IMR-90 (cell line): ENCODE measurements at regions of chr5 and their contacts with region 1.

Region 1: DNA sequence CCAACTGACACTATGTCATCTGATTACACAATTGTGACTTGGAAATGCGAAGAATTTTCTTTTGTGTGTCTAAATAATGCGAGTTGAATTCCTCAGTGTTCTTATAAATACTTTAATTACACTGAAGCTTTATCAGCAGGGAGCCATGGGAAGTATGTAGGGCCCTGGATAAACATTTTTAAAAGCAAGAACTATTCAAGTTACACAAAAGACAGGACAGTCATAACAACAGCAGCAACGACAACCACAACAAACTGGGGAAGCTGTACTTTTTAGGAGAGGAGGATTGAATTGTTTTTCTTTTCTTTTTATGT is 250.3 kb upstream of the ZNF608 start:
- DNase-seq: peak; percentile 56
- ATAC-seq: peak; percentile 68
- H3K4me3 ChIP-seq: no peak overlapping the region
- H3K27ac ChIP-seq: no peak overlapping the region; the same call in 1 of the 2 replicates
- H3K4me1 ChIP-seq: peaks cover 13% of the 10 kb centered on the region
- H3K27me3 ChIP-seq: no peaks in the 10 kb centered on the region
- CTCF ChIP-seq: no peak
- POLR2A ChIP-seq: no peak
- RAD21 ChIP-seq: no peak

Region 2: DNA sequence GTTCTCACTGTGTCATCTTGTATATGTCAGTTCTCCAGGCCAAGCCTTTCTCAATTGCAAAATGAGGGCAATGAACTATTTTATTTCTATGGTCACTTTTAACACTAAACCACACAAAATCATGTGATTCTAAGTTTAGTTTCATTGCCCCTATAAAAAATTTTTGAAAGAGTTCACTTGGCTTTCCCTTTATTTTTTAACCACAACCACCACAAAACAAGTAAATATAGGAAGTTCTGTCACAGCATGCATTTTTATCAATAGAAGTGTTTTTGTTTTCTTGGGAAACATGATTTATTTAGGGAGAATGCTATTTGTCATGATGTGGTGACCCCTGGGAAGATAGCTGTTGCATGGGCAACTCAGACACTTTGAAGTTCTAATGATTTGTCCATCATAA is 1315.7 kb before region 1 on chr5:
- CTCF ChIA-PET with region 1: no interaction called
- POLR2A ChIA-PET with region 1: interaction called, 11 read pairs
- dilution Hi-C with region 1: no loop called
- in situ Hi-C with region 1: no loop called
- intact Hi-C with region 1: no loop called
- DNase-seq: no peak
- ATAC-seq: no peak
- H3K4me3 ChIP-seq: no peak overlapping the region
- H3K27ac ChIP-seq: no peak overlapping the region
- H3K4me1 ChIP-seq: no peaks in the 10 kb centered on the region
- H3K27me3 ChIP-seq: no peaks in the 10 kb centered on the region
- CTCF ChIP-seq: no peak
- POLR2A ChIP-seq: no peak
- RAD21 ChIP-seq: no peak

Region 3: GRCh38 chr5:125311743-125312142 is 315.0 kb after region 1 on chr5:
- CTCF ChIA-PET with region 1: no interaction called
- POLR2A ChIA-PET with region 1: no interaction called
- dilution Hi-C with region 1: no loop called
- in situ Hi-C with region 1: no loop called
- intact Hi-C with region 1: loop called (anchors 2 kb)
- DNase-seq: peak; percentile 94
- ATAC-seq: peak; percentile 94
- H3K4me3 ChIP-seq: no peak overlapping the region
- H3K27ac ChIP-seq: peak overlapping the region; percentile 70
- H3K4me1 ChIP-seq: peaks cover 5% of the 10 kb centered on the region
- H3K27me3 ChIP-seq: no peaks in the 10 kb centered on the region
- CTCF ChIP-seq: no peak
- POLR2A ChIP-seq: no peak
- RAD21 ChIP-seq: no peak

Region 4: DNA sequence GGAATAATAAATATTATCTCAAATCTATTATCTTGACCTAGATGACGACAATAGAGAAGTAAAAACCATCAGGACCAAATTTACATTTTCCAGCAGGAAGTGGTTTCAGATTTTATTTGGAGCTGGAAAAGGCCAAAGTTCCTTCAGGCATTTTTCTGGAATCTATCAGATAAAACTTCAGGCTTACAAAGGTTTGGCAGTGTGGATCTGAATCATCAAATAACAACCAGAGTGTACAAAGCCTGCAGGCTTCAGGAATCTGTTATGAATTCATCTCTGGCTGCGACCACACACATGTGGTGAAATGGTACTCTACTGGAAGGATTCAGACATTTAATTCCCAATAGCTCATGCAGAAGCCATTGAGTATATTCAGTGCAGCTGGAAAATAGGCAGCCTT is 700.0 kb after region 1 on chr5:
- CTCF ChIA-PET with region 1: no interaction called
- POLR2A ChIA-PET with region 1: no interaction called
- dilution Hi-C with region 1: no loop called
- in situ Hi-C with region 1: no loop called
- intact Hi-C with region 1: no loop called
- DNase-seq: peak; percentile 87
- ATAC-seq: peak; percentile 91
- H3K4me3 ChIP-seq: no peak overlapping the region
- H3K27ac ChIP-seq: no peak overlapping the region
- H3K4me1 ChIP-seq: peaks cover 3% of the 10 kb centered on the region; the same call in 1 of the 2 replicates
- H3K27me3 ChIP-seq: no peaks in the 10 kb centered on the region
- CTCF ChIP-seq: no peak
- POLR2A ChIP-seq: no peak
- RAD21 ChIP-seq: no peak